HEK293 (cell line): ENCODE measurements at regions of chr1 and their contacts with region 1.

Region 1: DNA sequence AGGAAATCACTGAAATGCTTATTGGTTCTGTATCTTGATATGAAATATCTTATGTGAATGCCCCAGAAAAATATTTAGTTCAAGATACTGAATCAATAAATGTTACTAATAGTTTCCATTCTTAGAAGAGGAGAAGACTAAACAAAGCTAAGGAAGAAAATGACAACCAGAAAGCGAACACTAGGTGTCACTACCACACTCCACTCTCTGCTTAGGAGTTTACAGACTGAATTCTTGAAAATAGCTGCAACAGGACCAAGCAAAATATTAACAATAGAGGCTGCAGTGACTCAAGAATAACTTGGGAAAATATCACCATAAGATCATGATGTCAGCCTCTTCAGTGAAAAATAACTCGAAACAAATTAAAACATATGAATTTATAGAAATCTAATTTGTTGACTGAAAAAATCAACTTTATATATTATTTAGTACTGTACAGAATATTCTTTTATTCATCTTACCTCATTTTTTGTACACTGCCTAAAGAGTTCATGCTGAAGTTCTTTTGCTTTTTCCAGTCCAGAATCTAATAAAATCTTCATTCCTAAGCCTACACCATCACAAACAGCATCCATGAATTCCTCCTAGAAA is 61.6 kb downstream of the KIF14 start:
- H3K4me3 ChIP-seq: no peak overlapping the region
- H3K27ac ChIP-seq: no peak overlapping the region
- H3K4me1 ChIP-seq: no peaks in the 10 kb centered on the region
- CTCF ChIP-seq: no peak

Region 2: DNA sequence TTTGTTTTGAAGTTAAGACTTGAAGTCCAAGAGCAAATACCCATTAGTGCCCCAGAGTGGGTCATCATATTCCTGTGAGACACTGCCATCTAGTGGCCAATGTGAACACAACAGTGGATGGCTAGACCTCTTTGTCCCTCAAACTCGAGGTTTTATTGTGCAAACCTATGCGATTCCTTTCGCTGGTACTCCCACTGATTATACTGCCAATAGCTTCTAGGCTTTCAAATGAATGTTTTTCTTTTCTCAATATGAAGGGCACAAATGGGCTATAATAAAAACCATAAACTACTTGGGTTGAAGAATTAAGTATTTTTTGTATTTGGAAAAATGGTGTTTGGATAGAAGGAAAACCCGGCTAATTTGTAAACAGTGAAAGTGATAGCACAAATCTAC is 48.7 kb before region 1 on chr1:
- CTCF ChIA-PET with region 1: interaction called, 15 read pairs
- POLR2A ChIA-PET with region 1: no interaction called
- H3K4me3 ChIP-seq: no peak overlapping the region
- H3K27ac ChIP-seq: no peak overlapping the region
- H3K4me1 ChIP-seq: no peaks in the 10 kb centered on the region
- CTCF ChIP-seq: peak; percentile 85

Region 3: GRCh38 chr1:200530623-200531261 is 28.2 kb before region 1 on chr1:
- CTCF ChIA-PET with region 1: interaction called, 16 read pairs
- POLR2A ChIA-PET with region 1: no interaction called
- H3K4me3 ChIP-seq: no peak overlapping the region
- H3K27ac ChIP-seq: no peak overlapping the region
- H3K4me1 ChIP-seq: no peaks in the 10 kb centered on the region
- CTCF ChIP-seq: no peak